Psoas muscle (tissue), 8 donors: ENCODE measurements at regions of chr17 and their contacts with region 1.

Region 1: GRCh38 chr17:76182016-76182764 is 41.1 kb upstream of the FOXJ1 start:
- DNase-seq: peak; percentile 90 to 92
- ATAC-seq: peak; percentile 81 to 87 (median 84)
- H3K4me3 ChIP-seq: no peak overlapping the region
- H3K27ac ChIP-seq: peak overlapping the region; percentile 34
- H3K4me1 ChIP-seq: peaks cover 32% of the 10 kb centered on the region
- H3K27me3 ChIP-seq: no peaks in the 10 kb centered on the region
- CTCF ChIP-seq: peak; percentile 78

Region 2: DNA sequence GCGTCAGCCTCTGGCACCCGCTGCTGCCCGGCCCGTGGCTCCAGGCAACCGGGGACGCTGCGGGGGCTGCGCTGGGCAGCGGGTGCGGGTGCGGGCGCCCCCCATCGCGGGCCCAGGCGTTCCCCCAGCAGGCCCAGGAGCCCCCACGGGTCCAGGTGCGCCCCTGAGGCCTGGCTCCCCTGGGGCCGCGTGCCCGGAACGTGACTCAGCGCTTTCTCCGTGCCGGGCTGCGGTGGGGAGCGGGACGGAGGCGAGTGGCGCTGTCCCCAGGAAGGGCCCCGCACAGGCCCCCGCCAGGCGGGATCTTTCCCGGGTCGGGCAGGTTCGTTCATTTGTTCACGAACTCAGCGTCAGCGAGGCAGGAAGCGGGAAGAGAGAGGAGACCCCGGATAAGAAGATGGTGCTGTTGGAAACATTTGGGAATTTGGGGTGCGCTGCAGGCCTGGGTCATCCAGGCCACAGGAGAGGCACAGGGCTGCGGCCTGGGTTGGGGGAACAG is 60.2 kb before region 1 on chr17:
- intact Hi-C with region 1: loop called in 1 of 2 experiments (anchors 2 kb)
- DNase-seq: peak in 1 of 2 donors; percentile 57
- ATAC-seq: peak; percentile 44 to 64 (median 46)
- H3K4me3 ChIP-seq: peak overlapping the region; percentile 64
- H3K27ac ChIP-seq: peak overlapping the region; percentile 46
- H3K4me1 ChIP-seq: no peaks in the 10 kb centered on the region
- H3K27me3 ChIP-seq: no peaks in the 10 kb centered on the region
- CTCF ChIP-seq: no peak

Region 3: DNA sequence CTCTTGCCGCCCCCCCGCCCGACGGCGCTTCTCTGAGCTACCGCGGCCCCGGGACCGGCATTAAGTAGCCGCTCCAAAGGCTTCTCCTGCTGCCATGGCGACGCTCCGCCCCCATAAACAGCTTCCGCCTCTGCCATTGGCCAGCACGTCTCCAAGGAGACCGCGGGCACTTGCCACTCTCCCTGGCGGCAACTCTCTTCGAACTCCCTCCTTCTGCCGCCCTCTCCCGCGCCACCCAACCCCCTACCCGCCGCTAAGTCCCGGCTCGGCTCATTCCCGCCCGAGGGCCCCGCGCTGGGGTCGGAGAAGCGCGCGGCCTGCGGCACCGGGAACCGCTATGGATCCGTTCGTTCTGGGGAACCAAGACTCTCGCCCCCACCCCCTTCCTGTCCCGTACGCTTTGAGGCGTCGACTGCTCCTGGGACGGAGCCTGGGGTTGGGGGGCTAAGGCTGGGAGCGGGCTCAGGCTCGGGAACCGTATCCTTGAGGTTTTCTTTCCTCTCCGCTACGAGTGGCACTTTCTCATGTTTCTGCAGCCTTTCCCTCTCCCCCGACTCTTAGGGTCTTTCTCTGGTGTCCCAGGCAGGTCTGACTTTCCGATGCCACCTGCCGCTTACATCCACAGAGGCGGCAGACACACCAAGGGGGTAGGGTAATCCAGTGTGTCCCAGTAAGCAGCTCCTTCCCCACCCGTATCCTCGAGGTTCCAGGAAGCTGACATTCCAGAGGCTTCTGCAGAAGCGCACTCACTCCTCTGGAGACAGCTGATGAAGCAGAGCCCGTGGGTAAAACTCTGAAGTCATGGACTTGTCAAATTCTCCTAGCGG is 40.8 kb before region 1 on chr17 and contains the start of gene FOXJ1:
- intact Hi-C with region 1: no loop called
- DNase-seq: peak; percentile 85 to 94
- ATAC-seq: peak; percentile 89 to 96 (median 92)
- H3K4me3 ChIP-seq: peak within 1 kb of the TSS; percentile 67
- H3K27ac ChIP-seq: no peak within 1 kb of the TSS
- H3K4me1 ChIP-seq: peaks cover 11% of the 10 kb centered on the region
- H3K27me3 ChIP-seq: peaks cover 0 to 42% (median 24%) of the 10 kb centered on the region in 3 donors
- CTCF ChIP-seq: no peak
- total RNA-seq, gene FOXJ1: 0.11 to 0.15 TPM in 2 of 4 donors, not detected in the others

Region 4: DNA sequence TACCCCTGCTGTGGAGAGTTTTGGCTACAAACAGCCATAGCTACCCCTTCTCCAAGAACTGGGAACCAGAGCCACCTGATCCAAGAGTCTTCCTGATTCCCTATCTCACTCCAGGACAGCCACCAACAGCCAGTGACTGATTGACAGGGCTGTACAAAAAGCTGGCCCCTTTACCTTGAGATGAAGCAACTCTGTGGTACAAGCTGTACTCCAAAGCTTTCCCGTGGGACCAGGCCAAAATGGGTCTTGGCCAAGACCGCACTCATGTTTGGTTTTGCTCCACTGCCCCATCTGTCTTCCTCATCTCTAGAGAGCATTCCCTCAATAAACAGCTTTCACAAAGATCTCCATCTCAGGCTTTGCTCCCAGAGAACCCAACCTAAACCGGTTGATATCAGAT is 14.5 kb after region 1 on chr17:
- intact Hi-C with region 1: no loop called
- DNase-seq: peak; percentile 83 to 95
- ATAC-seq: peak; percentile 96 to 98 (median 97)
- H3K4me3 ChIP-seq: peak overlapping the region; percentile 12
- H3K27ac ChIP-seq: peak overlapping the region; percentile 81
- H3K4me1 ChIP-seq: peaks cover 45% of the 10 kb centered on the region
- H3K27me3 ChIP-seq: no peaks in the 10 kb centered on the region
- CTCF ChIP-seq: no peak